ENCODE measurements at regions of chr18 and their contacts with region 1.

Region 1: GRCh38 chr18:63320046-63320689 is 599 bp upstream of the BCL2 start:
- DNase-seq: peak; percentile 67 to 81 (median 68)
- H3K4me3 ChIP-seq: peak overlapping the region; percentile 57 to 89 (median 72)
- H3K4me3 Mint-ChIP-seq: peak overlapping the region; percentile 85 to 89
- H3K27ac ChIP-seq: peak overlapping the region in 1 of 2 donors; percentile 63
- H3K27ac Mint-ChIP-seq: peak overlapping the region in 6 of 7 donors; percentile 57 to 94 (median 77)
- H3K4me1 ChIP-seq: peaks cover 47 to 60% of the 10 kb centered on the region in 2 donors
- H3K4me1 Mint-ChIP-seq: peaks cover 50% of the 10 kb centered on the region
- H3K27me3 ChIP-seq: no peaks in the 10 kb centered on the region
- H3K27me3 Mint-ChIP-seq: peaks cover 8 to 15% (median 8%) of the 10 kb centered on the region in 3 donors
- CTCF ChIP-seq: no peak

Region 2: DNA sequence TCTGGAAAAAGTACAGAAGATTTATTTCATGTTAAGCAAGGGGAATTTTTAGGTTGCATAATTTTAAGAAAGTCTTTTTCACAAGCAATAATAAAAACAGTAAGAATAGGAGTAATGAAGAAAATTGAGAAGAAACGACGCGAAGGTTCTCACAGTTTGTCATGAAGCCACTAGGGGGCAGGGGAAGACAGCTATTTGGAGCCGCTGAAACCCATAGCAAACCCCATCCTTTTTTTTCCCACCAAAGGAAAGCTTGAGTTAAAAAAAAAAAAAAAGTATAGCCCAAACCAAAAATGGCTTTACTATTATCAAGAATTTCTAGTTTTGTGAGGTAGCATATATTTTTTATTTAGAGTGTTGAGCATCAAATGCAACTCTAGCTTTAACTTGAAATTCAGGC is 303.9 kb before region 1 on chr18:
- intact Hi-C with region 1: loop called (anchors 2 to 10 kb)
- DNase-seq: peak; percentile 22 to 54 (median 50)
- H3K4me3 ChIP-seq: no peak overlapping the region
- H3K4me3 Mint-ChIP-seq: no peak overlapping the region
- H3K27ac ChIP-seq: no peak overlapping the region
- H3K27ac Mint-ChIP-seq: no peak overlapping the region
- H3K4me1 ChIP-seq: no peaks in the 10 kb centered on the region
- H3K4me1 Mint-ChIP-seq: no peaks in the 10 kb centered on the region
- H3K27me3 ChIP-seq: no peaks in the 10 kb centered on the region
- H3K27me3 Mint-ChIP-seq: peaks cover 0 to 3% (median 0%) of the 10 kb centered on the region in 3 donors
- CTCF ChIP-seq: peak; percentile 86

Region 3: DNA sequence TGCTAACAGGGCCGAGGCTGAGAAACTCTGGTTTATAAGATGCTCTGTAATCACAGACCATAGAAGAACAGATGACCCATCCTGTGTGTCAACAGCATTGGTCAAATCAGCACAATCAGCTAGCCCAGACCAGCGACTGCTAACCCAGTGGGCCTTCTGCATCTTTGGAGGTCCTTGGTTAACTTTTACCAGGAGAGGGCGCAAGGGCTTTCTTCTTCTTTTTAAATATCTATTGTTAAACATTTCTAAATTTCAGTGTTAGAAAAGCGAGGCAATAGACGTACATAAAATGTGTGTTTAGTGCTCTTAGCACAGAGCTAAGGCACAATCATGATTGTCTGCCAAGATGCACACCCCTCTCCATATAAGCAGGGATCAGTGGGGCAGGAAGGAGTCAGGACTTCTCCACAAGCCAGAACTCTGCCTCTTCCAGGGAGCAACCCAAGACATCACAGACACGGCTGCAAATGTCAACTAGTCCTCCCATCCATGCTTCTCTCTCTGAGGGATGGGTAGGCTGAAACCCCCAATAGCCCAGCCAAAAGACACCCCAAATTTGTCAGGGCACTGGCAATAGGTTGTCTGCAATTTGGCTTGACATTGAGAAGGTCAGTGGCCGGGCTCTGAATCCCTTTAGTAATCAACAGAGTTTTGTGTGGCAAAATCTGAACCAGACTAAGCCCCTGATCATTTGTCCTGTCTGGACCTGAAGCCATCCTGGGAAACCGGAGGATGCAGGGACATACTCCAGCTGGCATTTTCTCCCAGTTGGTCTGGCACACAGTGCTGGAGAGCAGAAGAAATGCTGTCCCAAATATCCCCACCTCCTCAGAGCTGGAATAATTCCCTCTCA is 188.8 kb before region 1 on chr18:
- intact Hi-C with region 1: loop called (anchors 2 to 5 kb)
- DNase-seq: peak; percentile 38 to 57 (median 43)
- H3K4me3 ChIP-seq: no peak overlapping the region
- H3K4me3 Mint-ChIP-seq: no peak overlapping the region
- H3K27ac ChIP-seq: no peak overlapping the region
- H3K27ac Mint-ChIP-seq: peak overlapping the region in 1 of 7 donors; percentile 71
- H3K4me1 ChIP-seq: no peaks in the 10 kb centered on the region
- H3K4me1 Mint-ChIP-seq: peaks cover 15% of the 10 kb centered on the region
- H3K27me3 ChIP-seq: no peaks in the 10 kb centered on the region
- H3K27me3 Mint-ChIP-seq: peaks cover 0 to 2% (median 0%) of the 10 kb centered on the region in 3 donors
- CTCF ChIP-seq: peak; percentile 78

Region 4: GRCh38 chr18:63255435-63255834 is 64.7 kb before region 1 on chr18:
- intact Hi-C with region 1: loop called in 1 of 2 experiments (anchors 5 kb)
- DNase-seq: peak in 2 of 3 donors; percentile 31 to 54
- H3K4me3 ChIP-seq: no peak overlapping the region
- H3K4me3 Mint-ChIP-seq: no peak overlapping the region
- H3K27ac ChIP-seq: peak overlapping the region in 1 of 2 donors; percentile 92
- H3K27ac Mint-ChIP-seq: peak overlapping the region; percentile 46 to 96 (median 87)
- H3K4me1 ChIP-seq: peaks cover 35 to 46% of the 10 kb centered on the region in 2 donors
- H3K4me1 Mint-ChIP-seq: peaks cover 43% of the 10 kb centered on the region
- H3K27me3 ChIP-seq: no peaks in the 10 kb centered on the region
- H3K27me3 Mint-ChIP-seq: no peaks in the 10 kb centered on the region
- CTCF ChIP-seq: no peak